ENCODE measurements at regions of chr1 and their contacts with region 1.

Region 1: DNA sequence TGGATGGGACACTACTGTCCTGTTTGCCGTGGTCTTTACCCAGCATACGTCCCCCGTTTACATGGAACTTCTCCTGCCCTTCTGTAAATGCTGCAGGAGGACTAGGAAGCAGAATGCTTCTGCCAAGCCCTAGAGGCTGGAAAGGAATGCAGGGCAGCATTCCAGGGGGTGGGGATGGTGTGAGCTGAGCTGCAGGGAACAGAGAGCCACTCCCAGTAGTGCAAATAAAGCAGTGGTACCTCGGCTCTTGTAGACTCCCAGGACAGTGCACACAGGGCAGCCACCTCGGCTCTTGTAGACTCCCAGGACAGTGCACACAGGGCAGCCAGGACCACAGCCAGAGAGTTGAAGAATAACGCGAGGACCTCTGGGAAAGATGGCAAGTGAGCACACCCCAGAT is 35.4 kb downstream of the PTPRU start:
- DNase-seq: peak; percentile 85 to 92
- H3K4me3 ChIP-seq: no peak overlapping the region
- H3K4me3 Mint-ChIP-seq: peak overlapping the region; percentile 70
- H3K27ac Mint-ChIP-seq: peak overlapping the region; percentile 98
- H3K4me1 ChIP-seq: peaks cover 23% of the 10 kb centered on the region
- H3K4me1 Mint-ChIP-seq: peaks cover 28% of the 10 kb centered on the region
- H3K27me3 ChIP-seq: no peaks in the 10 kb centered on the region
- H3K27me3 Mint-ChIP-seq: no peaks in the 10 kb centered on the region
- CTCF ChIP-seq: no peak

Region 2: GRCh38 chr1:29282924-29283811 is 11.4 kb after region 1 on chr1:
- CTCF ChIA-PET with region 1: no interaction called
- POLR2A ChIA-PET with region 1: no interaction called
- intact Hi-C with region 1: loop called (anchors 1 kb)
- DNase-seq: peak; percentile 70 to 92
- H3K4me3 ChIP-seq: no peak overlapping the region
- H3K4me3 Mint-ChIP-seq: peak overlapping the region; percentile 28
- H3K27ac Mint-ChIP-seq: no peak overlapping the region
- H3K4me1 ChIP-seq: peaks cover 7% of the 10 kb centered on the region
- H3K4me1 Mint-ChIP-seq: no peaks in the 10 kb centered on the region
- H3K27me3 ChIP-seq: no peaks in the 10 kb centered on the region
- H3K27me3 Mint-ChIP-seq: no peaks in the 10 kb centered on the region
- CTCF ChIP-seq: no peak

Region 3: DNA sequence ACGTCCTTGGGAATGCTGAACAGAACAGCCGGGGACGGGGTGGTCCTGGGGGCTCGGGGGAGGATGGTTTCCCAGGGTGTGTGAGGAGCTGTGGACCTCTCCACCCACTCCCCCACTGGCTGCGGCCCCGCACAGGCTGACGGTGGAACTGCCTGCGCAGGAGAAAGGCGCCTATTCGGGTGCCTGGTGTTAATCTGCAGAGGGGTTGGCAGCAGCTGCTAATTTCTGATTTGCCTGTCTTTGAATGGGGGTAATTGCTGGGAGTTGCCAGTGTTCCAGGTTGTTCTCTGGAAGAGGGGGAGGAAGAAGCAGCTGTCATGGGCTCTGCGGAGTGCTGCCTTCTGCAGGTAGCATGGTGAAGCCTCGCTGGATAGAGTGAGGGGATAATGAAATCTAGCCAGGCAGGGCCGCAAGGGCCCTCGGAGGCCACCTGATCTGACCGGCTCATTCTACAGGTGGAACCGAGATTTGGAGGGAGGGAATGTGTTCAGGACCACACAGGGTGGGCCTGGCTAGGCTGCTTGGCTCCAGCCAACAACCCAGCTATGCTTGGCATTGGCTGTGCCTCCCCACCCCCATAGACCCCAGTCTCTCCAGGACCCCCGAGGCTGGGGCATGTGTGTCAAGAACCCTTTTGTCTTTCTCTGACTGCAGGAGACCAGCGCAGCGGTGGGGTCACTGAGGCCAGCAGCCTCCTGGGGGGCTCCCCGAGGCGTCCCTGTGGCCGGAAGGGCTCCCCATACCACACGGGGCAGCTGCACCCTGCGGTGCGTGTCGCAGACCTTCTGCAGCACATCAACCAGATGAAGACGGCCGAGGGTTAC is 31.7 kb after region 1 on chr1:
- CTCF ChIA-PET with region 1: no interaction called
- POLR2A ChIA-PET with region 1: no interaction called
- intact Hi-C with region 1: loop called (anchors 2 kb)
- DNase-seq: no peak
- H3K4me3 ChIP-seq: no peak overlapping the region
- H3K4me3 Mint-ChIP-seq: no peak overlapping the region
- H3K27ac Mint-ChIP-seq: no peak overlapping the region
- H3K4me1 ChIP-seq: no peaks in the 10 kb centered on the region
- H3K4me1 Mint-ChIP-seq: no peaks in the 10 kb centered on the region
- H3K27me3 ChIP-seq: no peaks in the 10 kb centered on the region
- H3K27me3 Mint-ChIP-seq: no peaks in the 10 kb centered on the region
- CTCF ChIP-seq: no peak

Measured in Caco-2 (cell line).